ENCODE measurements at regions of chr10 and their contacts with region 1.

Region 1: DNA sequence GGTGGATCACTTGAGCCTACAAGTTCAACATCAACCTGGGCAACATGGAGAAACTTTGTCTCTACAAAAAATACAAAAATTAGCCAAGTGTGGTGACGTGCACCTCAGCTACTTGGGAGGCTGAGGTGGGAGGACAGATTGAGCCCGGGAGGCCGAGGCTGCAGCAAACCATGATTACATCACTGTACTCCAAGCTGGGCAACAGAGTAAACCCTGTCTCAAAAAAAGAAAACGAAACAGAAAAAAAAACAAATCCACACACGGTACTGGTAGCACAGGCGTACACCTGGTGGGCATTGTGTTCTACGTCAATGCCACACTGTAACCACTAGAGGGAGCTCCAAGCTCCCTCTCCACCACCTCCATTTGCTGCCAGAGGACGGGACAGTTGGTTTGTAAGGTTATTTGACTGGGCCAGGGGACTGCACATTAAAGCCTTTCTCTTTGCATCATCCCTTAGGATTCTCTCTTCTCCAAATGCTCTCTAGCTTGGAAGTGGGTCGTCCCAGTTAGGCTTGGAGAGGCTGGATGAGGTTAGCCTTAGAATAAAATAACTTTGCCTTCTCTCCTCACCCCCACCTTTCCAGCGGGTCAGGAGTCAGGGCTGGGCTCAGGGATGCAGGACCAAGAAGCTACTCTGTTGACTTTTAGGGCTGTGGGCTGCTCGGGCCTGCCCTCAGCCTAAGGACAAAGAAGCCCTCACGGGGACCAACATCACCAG is 130.8 kb downstream of the SORBS1 start:
- DNase-seq: peak; percentile 51 to 64 (median 52)
- H3K4me3 ChIP-seq: no peak overlapping the region
- H3K27ac ChIP-seq: no peak overlapping the region
- H3K4me1 ChIP-seq: no peaks in the 10 kb centered on the region
- H3K27me3 ChIP-seq: no peaks in the 10 kb centered on the region
- CTCF ChIP-seq: peak; percentile 86 to 91 (median 88)
- EP300 ChIP-seq: no peak
- POLR2A ChIP-seq: no peak

Region 2: GRCh38 chr10:95308389-95309302 is 121.7 kb before region 1 on chr10:
- intact Hi-C with region 1: no loop called
- DNase-seq: peak; percentile 47 to 71 (median 57)
- H3K4me3 ChIP-seq: no peak overlapping the region
- H3K27ac ChIP-seq: no peak overlapping the region
- H3K4me1 ChIP-seq: no peaks in the 10 kb centered on the region
- H3K27me3 ChIP-seq: no peaks in the 10 kb centered on the region
- CTCF ChIP-seq: no peak
- EP300 ChIP-seq: no peak
- POLR2A ChIP-seq: no peak

Region 3: DNA sequence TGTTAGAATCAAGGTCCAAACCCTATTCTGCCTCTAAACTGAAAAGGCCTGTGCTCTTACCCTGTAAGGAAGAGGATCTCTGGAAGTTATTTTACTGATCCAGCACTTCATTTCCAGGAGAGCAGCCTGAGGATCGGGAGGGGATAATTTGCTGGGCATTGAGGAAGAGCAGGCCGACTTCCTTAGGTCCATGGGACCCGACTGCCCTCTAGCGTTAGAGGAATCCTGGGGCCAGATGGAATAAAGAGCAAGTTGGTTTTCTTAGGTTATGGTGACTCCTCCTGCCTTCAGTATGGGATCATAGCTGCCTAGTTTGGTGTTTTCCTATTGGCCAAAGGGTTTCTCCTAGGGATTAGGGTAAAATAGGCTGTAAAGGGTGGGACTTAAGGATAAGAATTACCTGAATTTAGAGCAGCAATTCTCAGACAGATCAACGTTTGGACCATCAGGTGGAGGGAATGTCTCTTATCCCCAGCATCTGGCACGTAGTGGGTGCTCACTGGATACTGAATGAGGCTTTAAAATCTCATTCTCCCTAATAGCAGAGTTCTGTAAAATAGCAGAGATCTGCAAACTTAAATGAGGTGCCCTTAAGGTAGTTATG is 170.8 kb after region 1 on chr10:
- intact Hi-C with region 1: loop called (anchors 2 to 5 kb)
- DNase-seq: peak; percentile 71 to 84 (median 81)
- H3K4me3 ChIP-seq: no peak overlapping the region
- H3K27ac ChIP-seq: no peak overlapping the region
- H3K4me1 ChIP-seq: no peaks in the 10 kb centered on the region
- H3K27me3 ChIP-seq: no peaks in the 10 kb centered on the region
- CTCF ChIP-seq: peak; percentile 78 to 88 (median 84)
- EP300 ChIP-seq: no peak
- POLR2A ChIP-seq: no peak

Measured in ovary (tissue), 10 donors.